ACHN (cell line): ENCODE measurements at regions of chr9 and their contacts with region 1.

Region 1: GRCh38 chr9:69444021-69444420 is 119.0 kb downstream of the ENTREP1 start:
- DNase-seq: peak; percentile 24

Region 2: DNA sequence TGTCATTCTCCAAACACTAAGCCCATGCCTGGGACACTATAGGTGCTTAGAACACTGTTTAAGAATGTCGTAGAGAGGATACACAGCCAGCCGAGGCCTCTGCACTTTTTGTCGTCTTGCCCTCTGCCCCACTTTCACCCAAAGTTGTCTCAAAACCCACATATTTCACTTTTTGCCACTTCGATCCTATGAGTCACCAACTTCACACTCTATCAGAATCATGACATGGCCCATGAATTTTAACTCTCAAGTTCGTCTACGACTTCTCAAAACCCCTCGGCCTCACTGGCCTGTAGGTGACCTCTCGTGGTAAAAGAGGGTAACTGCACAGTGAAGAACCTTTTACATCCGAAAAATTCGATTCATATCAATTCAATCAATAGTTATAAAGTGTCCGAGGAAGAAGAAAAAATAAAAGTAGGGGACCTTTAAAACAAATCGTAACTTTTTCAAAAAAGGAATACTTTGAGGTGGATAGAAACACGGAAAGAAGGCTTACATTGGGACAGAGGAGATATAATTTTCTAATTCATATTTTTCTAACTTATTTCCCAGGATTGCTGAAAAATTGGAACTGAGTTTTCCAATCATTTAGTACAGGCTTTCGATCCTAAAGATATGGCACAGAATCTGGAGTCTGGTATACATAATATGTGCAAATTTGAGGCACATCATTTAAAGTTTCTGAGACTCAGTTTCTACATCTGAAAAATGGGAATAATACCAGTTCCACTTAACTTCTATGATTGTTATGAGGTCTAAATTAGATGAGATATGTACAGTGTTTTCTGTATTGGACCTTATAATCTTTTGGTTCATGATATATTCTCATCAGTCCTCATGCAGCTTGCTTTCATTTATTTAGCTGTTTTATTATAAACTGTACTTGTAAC is 105.5 kb after region 1 on chr9:
- in situ Hi-C with region 1: loop called (anchors 25 kb)
- DNase-seq: peak; percentile 59

Region 3: GRCh38 chr9:70120834-70121510 is 677.0 kb after region 1 on chr9:
- in situ Hi-C with region 1: no loop called
- DNase-seq: peak; percentile 56